Naive thymus-derived CD4-positive, alpha-beta T cell (primary cell): ENCODE measurements at regions of chr1 and their contacts with region 1.

Region 1: DNA sequence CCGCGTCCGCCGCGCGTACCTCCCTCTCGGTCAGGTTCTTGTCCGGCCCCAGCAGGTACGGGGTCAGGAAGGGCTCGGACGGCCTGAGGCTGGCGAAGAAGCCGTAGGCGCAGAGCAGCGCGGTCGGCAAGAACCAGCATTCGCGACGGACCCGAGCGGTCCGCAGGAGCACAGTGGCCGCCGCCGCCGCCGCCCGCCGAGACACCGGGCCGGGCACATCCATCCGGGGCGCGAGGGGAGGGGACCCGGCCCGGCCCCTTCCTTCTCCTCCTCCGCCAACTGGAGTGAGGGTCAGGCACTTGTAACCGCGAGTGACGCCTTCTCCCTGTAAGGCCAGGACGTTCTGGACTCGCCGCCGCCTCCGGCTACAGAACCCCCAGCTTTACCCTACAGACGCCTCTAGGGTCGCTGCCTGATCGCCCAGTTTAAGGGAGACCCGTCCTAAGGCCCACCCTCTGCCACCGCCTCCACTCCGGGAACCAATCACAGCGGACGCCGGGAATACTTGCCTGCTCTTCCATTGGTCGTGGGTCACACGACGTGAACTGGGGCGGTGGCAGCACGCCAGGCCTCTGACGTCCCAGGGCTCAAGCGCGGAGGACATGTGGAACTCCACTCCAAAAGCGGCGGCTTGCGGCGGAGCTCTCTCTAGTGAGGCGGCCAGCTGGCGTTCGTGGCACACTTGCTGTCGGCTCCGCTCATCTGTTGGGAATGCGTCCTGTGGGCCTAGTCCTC is at the start of gene SLC19A2:
- DNase-seq: peak; percentile 79 to 94 (median 89)
- ATAC-seq: peak; percentile 99
- H3K4me3 ChIP-seq: peak within 1 kb of the TSS; percentile 66
- H3K4me3 Mint-ChIP-seq: peak within 1 kb of the TSS; percentile 87 to 98 (median 94)
- H3K27ac ChIP-seq: peak within 1 kb of the TSS; percentile 81
- H3K27ac Mint-ChIP-seq: peak within 1 kb of the TSS; percentile 86 to 98 (median 94)
- H3K4me1 ChIP-seq: peaks cover 4 to 12% of the 10 kb centered on the region in 2 donors
- H3K4me1 Mint-ChIP-seq: peaks cover 35 to 56% (median 46%) of the 10 kb centered on the region in 7 donors
- H3K27me3 ChIP-seq: no peaks in the 10 kb centered on the region
- H3K27me3 Mint-ChIP-seq: peaks cover 0 to 8% (median 0%) of the 10 kb centered on the region in 5 donors
- total RNA-seq, gene SLC19A2: 3.7 to 5.9 (median 4.8) TPM

Region 2: DNA sequence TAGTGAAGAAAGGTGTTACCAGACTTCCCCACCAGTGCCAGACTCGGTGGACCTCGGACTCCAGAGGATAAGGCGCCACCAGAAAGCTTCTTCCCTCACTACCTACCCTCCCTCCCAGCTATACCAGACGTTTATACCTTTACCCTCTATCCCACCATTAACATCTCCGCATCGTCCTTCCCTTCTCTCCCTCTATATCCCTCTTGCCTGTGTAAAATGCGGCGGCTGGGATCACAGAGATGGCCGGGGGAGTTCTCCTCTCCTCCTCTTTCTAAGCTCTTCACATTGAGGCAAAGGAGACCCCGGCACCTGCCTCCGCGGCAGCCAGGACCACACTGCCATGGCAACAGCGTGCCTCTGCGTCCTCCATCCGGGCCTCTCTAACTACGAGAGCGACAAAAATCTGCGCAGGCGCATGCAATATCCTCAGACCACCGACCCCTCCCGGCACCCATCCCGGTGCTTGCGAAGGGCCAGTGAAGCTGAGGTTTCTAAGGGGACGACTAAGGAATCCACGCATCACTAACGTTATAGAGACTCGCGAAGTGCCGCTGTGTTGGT is 58.5 kb before region 1 on chr1 and contains the start of gene CCDC181:
- CTCF ChIA-PET with region 1: no interaction called
- POLR2A ChIA-PET with region 1: no interaction called
- intact Hi-C with region 1: loop called in 1 of 2 experiments (anchors 1 kb)
- DNase-seq: peak in 8 of 9 donors; percentile 9 to 65 (median 40)
- ATAC-seq: peak; percentile 76
- H3K4me3 ChIP-seq: peak within 1 kb of the TSS; percentile 51
- H3K4me3 Mint-ChIP-seq: peak within 1 kb of the TSS; percentile 84 to 96 (median 92)
- H3K27ac ChIP-seq: no peak within 1 kb of the TSS
- H3K27ac Mint-ChIP-seq: peak within 1 kb of the TSS in 5 of 9 donors; percentile 4 to 76 (median 68)
- H3K4me1 ChIP-seq: peaks cover 0 to 3% of the 10 kb centered on the region in 2 donors
- H3K4me1 Mint-ChIP-seq: peaks cover 5 to 8% (median 7%) of the 10 kb centered on the region in 7 donors
- H3K27me3 ChIP-seq: peaks cover 8 to 20% of the 10 kb centered on the region in 2 donors
- H3K27me3 Mint-ChIP-seq: peaks cover 67 to 88% (median 79%) of the 10 kb centered on the region in 5 donors
- total RNA-seq, gene CCDC181: not detected

Region 3: DNA sequence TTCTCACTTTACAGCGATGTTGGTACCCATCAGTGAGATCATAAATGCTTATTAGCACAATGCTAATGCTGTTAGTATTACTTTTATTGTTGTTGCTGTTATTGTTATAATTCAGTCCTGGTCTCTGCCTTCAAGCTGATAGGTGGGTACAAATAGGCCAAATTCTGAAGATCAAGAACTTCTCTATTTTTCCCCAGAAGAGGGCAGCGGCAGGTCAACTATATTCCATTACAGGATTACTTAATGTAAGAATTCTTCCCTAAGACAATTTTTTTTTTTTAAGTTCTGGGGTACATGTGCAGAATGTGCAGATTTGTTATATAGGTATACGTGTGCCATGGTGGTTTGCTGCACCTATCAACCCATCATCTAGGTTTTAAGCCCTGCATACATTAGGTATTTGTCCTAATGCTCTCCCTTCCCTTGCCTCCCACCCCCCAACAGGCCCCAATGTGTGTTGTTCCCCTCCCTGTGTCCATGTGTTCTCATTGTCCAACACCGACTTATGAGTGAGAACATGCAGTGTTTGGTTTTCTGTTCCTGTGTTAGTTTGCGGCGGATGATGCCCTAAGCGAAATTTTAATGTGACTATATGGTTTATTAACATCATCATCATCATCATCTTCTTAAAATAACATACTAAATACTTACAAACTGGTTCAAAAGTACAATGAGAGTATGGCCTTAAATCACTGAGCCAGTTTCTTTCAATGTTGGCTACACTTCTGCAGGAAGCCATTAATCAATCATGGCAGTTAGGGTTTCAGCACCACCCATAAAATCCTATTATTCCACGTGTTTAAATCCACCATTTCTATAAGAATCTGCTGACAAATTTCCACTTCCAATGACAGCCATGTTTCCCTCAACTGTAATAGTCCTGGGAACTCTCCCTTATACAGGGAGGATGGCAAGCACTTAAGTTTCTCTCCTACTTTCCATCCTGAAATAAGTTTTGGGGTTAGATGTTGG is 19.2 kb before region 1 on chr1:
- CTCF ChIA-PET with region 1: no interaction called
- POLR2A ChIA-PET with region 1: no interaction called
- intact Hi-C with region 1: loop called in 1 of 2 experiments (anchors 1 kb)
- DNase-seq: peak in 3 of 9 donors; percentile 10 to 18 (median 18)
- ATAC-seq: no peak
- H3K4me3 ChIP-seq: no peak overlapping the region
- H3K4me3 Mint-ChIP-seq: no peak overlapping the region
- H3K27ac ChIP-seq: no peak overlapping the region
- H3K27ac Mint-ChIP-seq: peak overlapping the region in 1 of 9 donors; percentile 27
- H3K4me1 ChIP-seq: no peaks in the 10 kb centered on the region
- H3K4me1 Mint-ChIP-seq: peaks cover 0 to 6% (median 5%) of the 10 kb centered on the region in 7 donors
- H3K27me3 ChIP-seq: no peaks in the 10 kb centered on the region
- H3K27me3 Mint-ChIP-seq: peaks cover 0 to under 1% (median 0%) of the 10 kb centered on the region in 5 donors

Region 4: DNA sequence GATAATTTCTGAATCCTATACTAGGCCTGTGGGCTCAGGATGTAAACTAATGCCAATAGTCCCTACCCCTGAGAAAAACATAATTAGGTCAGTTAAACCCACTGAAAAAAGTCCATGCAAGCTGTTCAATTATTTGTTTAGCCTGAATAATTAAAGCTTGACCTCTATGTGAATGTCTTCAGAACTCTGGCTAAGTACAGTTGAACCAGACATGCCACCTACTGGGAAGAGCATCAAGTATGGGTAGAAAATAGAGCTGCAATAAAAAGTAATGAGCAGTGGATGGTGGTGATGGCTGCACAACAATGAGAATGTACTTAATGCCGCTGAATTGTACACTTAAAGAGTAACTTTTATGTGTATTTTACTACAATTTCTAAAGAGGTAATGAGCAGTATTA is 23.6 kb after region 1 on chr1:
- CTCF ChIA-PET with region 1: no interaction called
- POLR2A ChIA-PET with region 1: no interaction called
- intact Hi-C with region 1: loop called in 1 of 2 experiments (anchors 2 kb)
- DNase-seq: no peak
- ATAC-seq: no peak
- H3K4me3 ChIP-seq: no peak overlapping the region
- H3K4me3 Mint-ChIP-seq: no peak overlapping the region
- H3K27ac ChIP-seq: no peak overlapping the region
- H3K27ac Mint-ChIP-seq: no peak overlapping the region
- H3K4me1 ChIP-seq: peaks cover 0 to 9% of the 10 kb centered on the region in 2 donors
- H3K4me1 Mint-ChIP-seq: peaks cover 0 to 19% (median 12%) of the 10 kb centered on the region in 7 donors
- H3K27me3 ChIP-seq: no peaks in the 10 kb centered on the region
- H3K27me3 Mint-ChIP-seq: no peaks in the 10 kb centered on the region

Region 5: GRCh38 chr1:169546087-169546995 is 60.6 kb after region 1 on chr1:
- CTCF ChIA-PET with region 1: interaction called, 3 read pairs
- POLR2A ChIA-PET with region 1: no interaction called
- intact Hi-C with region 1: loop called (anchors 1 kb)
- DNase-seq: peak in 7 of 9 donors; percentile 40 to 73 (median 68)
- ATAC-seq: peak; percentile 92
- H3K4me3 ChIP-seq: no peak overlapping the region
- H3K4me3 Mint-ChIP-seq: no peak overlapping the region
- H3K27ac ChIP-seq: no peak overlapping the region
- H3K27ac Mint-ChIP-seq: peak overlapping the region in 1 of 9 donors; percentile 7
- H3K4me1 ChIP-seq: no peaks in the 10 kb centered on the region
- H3K4me1 Mint-ChIP-seq: peaks cover 0 to 14% (median 0%) of the 10 kb centered on the region in 7 donors
- H3K27me3 ChIP-seq: no peaks in the 10 kb centered on the region
- H3K27me3 Mint-ChIP-seq: no peaks in the 10 kb centered on the region

Region 6: GRCh38 chr1:169794530-169795416 is 309.1 kb after region 1 on chr1 and contains the start of gene METTL18:
- CTCF ChIA-PET with region 1: interaction called, 9 read pairs
- POLR2A ChIA-PET with region 1: no interaction called
- intact Hi-C with region 1: loop called (anchors 1 kb)
- DNase-seq: peak; percentile 72 to 96 (median 92)
- ATAC-seq: peak; percentile 100
- H3K4me3 ChIP-seq: peak within 1 kb of the TSS; percentile 98
- H3K4me3 Mint-ChIP-seq: peak within 1 kb of the TSS; percentile 90 to 100 (median 100)
- H3K27ac ChIP-seq: peak within 1 kb of the TSS; percentile 94
- H3K27ac Mint-ChIP-seq: peak within 1 kb of the TSS; percentile 97 to 100 (median 99)
- H3K4me1 ChIP-seq: peaks cover 10 to 28% of the 10 kb centered on the region in 2 donors
- H3K4me1 Mint-ChIP-seq: peaks cover 26 to 60% (median 56%) of the 10 kb centered on the region in 7 donors
- H3K27me3 ChIP-seq: no peaks in the 10 kb centered on the region
- H3K27me3 Mint-ChIP-seq: no peaks in the 10 kb centered on the region
- total RNA-seq, gene METTL18: 4.9 to 21.1 (median 13.4) TPM

Region 7: DNA sequence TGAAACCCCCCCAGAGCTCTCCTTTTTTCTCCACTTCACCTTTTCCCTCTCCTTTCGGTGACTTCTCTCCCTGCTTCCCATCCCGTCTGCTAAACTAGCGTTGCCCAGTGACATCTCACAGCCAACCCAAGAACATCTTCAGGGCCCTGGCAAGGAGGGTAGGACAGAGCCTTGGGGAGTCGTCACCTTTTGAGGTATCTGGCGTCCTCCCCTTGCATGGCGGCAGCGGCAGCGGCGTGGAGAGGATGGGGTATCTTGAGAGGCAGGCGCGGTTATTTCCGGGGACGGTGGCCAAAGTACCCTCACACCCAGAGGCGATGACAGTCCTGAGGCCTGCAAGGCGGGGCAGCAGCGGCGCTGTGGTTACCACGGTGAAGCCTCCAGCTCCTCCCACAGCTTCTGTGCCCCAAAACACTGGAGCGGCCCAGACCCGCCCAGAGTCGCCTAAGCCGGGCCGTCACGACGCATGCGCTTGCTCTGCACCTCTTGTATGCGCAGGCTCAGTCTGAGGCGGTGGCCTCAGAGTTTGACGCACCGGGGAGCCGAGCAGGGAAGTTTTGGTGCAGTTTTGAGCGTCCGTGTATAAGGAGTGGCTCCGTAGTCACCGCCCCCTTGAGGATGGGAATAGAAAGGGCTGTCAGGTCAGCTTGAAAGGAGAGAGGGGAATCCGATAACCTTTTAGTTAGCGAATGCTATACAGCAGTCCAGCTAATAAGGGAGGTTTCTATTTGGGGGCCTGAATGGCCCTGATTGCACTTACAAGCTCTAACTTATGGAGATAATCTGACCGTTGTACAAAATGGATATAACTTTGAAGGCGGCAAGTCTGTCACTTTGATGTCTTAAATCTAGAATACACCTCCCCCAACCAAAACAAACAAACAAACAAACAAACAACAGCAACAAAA is 588.8 kb after region 1 on chr1 and contains the start of gene KIFAP3:
- CTCF ChIA-PET with region 1: no interaction called
- POLR2A ChIA-PET with region 1: no interaction called
- intact Hi-C with region 1: loop called (anchors 1 to 10 kb)
- DNase-seq: peak; percentile 84 to 94 (median 92)
- ATAC-seq: peak; percentile 96
- H3K4me3 ChIP-seq: peak within 1 kb of the TSS; percentile 76
- H3K4me3 Mint-ChIP-seq: peak within 1 kb of the TSS; percentile 89 to 99 (median 96)
- H3K27ac ChIP-seq: peak within 1 kb of the TSS; percentile 90
- H3K27ac Mint-ChIP-seq: peak within 1 kb of the TSS; percentile 83 to 98 (median 94)
- H3K4me1 ChIP-seq: peaks cover 15 to 37% of the 10 kb centered on the region in 2 donors
- H3K4me1 Mint-ChIP-seq: peaks cover 34 to 65% (median 57%) of the 10 kb centered on the region in 7 donors
- H3K27me3 ChIP-seq: no peaks in the 10 kb centered on the region
- H3K27me3 Mint-ChIP-seq: peaks cover 0 to 3% (median 0%) of the 10 kb centered on the region in 5 donors
- total RNA-seq, gene KIFAP3: 12.8 to 23.8 (median 20.1) TPM